ENCODE measurements at regions of chr6 and their contacts with region 1.

Region 1: DNA sequence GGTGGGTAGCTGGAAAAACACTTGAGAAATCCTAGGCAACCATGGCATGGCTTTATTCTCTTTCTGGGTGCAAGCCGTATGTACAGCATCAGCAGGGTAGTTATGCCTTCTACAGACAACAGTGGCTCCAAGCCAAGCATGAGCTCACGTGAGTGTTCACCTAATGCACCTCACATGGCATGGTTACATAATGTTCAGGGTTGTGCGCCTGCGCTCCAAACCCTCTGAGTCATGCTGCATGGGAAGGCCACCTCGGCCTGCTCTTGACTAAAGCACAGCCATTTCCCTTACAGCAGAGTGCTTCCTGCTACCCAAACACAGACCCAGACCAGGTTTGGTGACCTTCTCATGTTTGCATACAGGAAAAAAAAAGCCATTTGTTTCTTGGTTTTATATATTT is 96.2 kb downstream of the VIP start:
- DNase-seq: peak; percentile 52
- H3K4me3 ChIP-seq: no peak overlapping the region
- H3K27ac ChIP-seq: no peak overlapping the region
- H3K4me1 ChIP-seq: no peaks in the 10 kb centered on the region
- CTCF ChIP-seq: no peak

Region 2: DNA sequence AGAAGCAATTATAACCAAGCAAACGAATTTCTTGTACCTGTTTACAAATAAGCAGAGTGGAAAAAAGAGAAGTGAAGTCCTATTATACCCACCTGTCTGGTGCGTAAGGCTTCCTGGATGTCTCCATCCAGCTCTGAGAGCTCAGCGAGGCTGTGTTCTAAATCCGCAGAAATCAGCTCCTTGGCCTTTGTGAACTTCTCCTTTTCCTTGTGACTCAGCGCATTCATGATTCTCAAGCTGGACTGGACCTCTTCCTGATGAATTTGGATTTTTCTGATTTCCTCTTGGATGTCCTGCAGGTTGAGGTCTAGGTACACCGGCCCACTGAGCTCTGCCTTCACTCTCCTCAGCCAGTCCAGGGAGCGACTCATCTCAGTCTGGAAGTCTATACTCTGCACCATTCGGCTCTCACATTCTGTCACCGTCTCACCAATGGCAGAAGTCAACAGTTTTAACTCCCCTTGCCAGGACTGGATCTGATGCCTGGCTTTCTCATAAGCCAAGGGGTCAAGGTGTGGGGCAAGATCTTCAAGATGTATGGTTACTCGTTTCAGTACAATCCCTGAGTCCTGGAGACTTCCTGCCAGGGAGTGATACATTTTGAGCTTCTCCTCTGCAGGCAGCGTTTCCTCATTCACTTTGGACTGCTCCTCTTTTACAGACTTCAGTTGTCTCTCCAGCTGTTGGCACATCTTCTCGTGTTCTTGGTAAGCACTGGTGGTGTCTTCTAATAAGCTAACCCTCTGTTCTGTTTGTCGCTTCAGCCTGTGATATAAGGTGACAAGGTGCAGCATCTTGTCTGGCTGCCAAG is 517.0 kb before region 1 on chr6:
- CTCF ChIA-PET with region 1: no interaction called
- POLR2A ChIA-PET with region 1: no interaction called
- intact Hi-C with region 1: no loop called
- DNase-seq: no peak
- H3K4me3 ChIP-seq: no peak overlapping the region
- H3K27ac ChIP-seq: no peak overlapping the region
- H3K4me1 ChIP-seq: no peaks in the 10 kb centered on the region
- CTCF ChIP-seq: no peak

Region 3: DNA sequence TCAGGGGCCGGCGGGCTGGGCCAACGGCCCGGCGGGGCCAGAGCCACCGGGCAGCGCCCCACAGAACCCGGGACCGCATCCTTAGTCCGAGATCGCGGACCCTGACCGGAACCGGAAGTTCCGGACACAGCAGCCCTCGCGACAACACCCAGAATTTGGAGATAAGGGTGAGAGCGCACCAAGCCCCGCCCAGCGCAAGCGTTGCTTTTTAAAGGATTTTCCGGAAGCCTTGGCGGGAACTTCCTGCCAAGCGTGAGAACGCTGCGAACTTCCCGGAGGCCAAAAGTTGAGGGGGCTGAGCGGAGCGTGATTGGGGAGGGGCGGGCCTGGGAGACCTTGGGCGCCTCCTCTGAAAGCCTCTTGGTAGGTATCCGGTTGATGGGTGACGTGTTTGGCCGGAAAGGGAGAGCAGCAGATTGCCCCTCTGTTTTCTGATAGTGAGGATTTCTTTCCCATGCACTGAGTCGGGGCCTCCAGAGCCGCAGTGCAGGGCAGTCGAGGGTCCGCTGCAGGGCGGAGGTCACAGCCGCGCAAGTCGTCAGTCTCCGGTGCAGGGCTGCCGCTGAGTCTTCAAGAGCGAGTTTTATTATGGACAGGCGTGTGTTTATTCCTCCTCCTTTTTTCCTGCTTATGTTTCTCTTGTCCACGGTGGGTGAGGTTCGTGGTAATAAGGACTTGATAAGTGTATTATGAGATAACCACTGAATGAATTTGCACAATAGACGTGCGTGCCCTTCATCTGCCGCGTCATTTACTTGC is 156.0 kb after region 1 on chr6 and contains the start of gene MTRF1L:
- CTCF ChIA-PET with region 1: no interaction called
- POLR2A ChIA-PET with region 1: no interaction called
- intact Hi-C with region 1: no loop called
- DNase-seq: peak; percentile 96
- H3K4me3 ChIP-seq: peak within 1 kb of the TSS; percentile 75
- H3K27ac ChIP-seq: peak within 1 kb of the TSS; percentile 57
- H3K4me1 ChIP-seq: peaks cover 22% of the 10 kb centered on the region
- CTCF ChIP-seq: no peak
- total RNA-seq, gene MTRF1L: 10.4 and 11.0 TPM in 2 replicates

Region 4: GRCh38 chr6:153392156-153392555 is 545.3 kb after region 1 on chr6:
- CTCF ChIA-PET with region 1: no interaction called
- POLR2A ChIA-PET with region 1: no interaction called
- intact Hi-C with region 1: loop called (anchors 5 kb)
- DNase-seq: no peak
- H3K4me3 ChIP-seq: no peak overlapping the region
- H3K27ac ChIP-seq: no peak overlapping the region
- H3K4me1 ChIP-seq: no peaks in the 10 kb centered on the region
- CTCF ChIP-seq: no peak